Right cardiac atrium (tissue), 5 donors: ENCODE measurements at regions of chr1 and their contacts with region 1.

Region 1: DNA sequence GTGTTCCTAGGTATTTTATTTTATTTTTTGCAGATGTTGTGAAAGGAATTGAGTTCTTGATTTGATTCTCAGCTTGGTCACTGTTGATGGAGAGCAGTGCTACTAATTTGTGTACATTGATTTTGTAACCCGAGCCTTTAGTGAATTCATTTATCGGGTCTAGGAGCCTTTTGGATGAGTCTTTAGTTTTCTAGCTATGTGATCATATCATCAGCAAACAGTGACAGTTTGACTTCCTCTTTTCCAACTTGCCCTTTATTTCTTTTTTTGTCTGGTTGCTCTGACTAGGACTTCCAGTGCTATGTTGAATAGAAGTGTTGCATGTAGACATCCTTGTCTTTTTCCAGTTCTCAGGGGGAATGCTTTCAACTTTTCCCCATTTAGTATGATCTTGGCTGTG is 138.9 kb downstream of the LHX8 start:
- DNase-seq: no peak
- ATAC-seq: no peak
- H3K4me3 ChIP-seq: no peak overlapping the region
- H3K27ac ChIP-seq: no peak overlapping the region
- H3K4me1 ChIP-seq: no peaks in the 10 kb centered on the region
- H3K27me3 ChIP-seq: no peaks in the 10 kb centered on the region

Region 2: DNA sequence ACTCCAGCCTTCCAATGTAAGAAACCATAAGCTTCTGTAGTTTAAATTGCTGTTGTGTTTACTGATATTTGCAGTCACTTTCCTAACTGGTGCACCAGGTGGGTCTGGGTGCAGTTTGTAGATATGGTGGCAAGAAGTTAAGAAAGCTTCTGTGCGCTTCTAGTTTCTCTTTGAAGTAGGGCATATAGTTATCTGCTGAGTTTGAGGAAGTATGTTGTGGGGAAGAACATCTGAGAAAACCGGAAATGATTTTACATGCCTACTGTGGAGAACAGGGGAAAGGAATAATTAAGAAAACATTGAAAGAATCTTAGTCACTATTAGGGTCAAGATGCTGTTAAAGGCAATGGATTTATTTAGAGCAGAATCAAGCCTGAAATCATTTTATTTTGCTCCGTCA is 352.7 kb after region 1 on chr1:
- intact Hi-C with region 1: loop called in 3 of 4 experiments (anchors 5 to 10 kb)
- DNase-seq: no peak
- ATAC-seq: no peak
- H3K4me3 ChIP-seq: no peak overlapping the region
- H3K27ac ChIP-seq: no peak overlapping the region
- H3K4me1 ChIP-seq: no peaks in the 10 kb centered on the region
- H3K27me3 ChIP-seq: no peaks in the 10 kb centered on the region